RWPE1 (cell line): ENCODE measurements at regions of chr12 and their contacts with region 1.

Region 1: GRCh38 chr12:47758834-47759690 is at the start of gene RAPGEF3:
- DNase-seq: peak; percentile 93
- H3K27ac ChIP-seq: peak within 1 kb of the TSS; percentile 80
- CTCF ChIP-seq: peak; percentile 70

Region 2: DNA sequence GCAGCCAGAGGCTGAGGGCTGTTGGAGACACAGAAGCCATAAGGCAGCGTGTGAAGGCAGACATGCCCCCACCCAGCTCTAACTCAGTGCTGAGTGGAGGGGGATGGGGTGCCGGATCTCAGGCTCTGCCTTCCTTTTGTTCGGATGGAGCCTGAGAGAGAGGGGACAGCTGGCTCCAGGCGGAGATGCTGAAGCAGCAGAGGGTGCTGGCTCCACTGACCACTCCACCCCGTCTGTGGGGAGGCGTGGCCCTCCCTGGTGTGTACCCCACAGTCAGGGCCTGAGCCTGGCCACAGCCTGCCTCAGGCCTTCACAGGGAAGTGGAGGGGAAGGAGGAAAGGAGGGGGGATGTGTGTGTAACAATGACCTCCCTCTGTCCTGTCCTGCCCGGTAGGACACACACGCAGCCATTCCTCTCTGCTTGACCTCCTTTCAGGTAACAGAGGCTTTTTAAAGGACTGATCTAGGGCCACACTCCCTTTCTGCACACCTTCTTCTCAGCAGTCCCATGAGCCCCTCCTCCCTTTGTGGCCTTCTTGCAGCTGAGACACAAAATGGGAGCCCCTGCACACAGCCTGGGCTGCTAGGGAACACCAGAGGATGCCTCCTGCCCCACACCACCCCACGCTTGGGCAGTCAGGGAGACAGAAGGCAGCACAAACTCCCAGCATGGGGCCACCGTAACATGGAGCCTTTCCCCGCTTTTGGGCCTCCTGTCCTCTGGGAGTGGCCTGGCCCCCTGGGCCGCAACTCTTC is 24.2 kb before region 1 on chr12:
- CTCF ChIA-PET with region 1: no interaction called
- POLR2A ChIA-PET with region 1: no interaction called
- DNase-seq: no peak
- H3K27ac ChIP-seq: no peak overlapping the region
- CTCF ChIP-seq: no peak

Region 3: DNA sequence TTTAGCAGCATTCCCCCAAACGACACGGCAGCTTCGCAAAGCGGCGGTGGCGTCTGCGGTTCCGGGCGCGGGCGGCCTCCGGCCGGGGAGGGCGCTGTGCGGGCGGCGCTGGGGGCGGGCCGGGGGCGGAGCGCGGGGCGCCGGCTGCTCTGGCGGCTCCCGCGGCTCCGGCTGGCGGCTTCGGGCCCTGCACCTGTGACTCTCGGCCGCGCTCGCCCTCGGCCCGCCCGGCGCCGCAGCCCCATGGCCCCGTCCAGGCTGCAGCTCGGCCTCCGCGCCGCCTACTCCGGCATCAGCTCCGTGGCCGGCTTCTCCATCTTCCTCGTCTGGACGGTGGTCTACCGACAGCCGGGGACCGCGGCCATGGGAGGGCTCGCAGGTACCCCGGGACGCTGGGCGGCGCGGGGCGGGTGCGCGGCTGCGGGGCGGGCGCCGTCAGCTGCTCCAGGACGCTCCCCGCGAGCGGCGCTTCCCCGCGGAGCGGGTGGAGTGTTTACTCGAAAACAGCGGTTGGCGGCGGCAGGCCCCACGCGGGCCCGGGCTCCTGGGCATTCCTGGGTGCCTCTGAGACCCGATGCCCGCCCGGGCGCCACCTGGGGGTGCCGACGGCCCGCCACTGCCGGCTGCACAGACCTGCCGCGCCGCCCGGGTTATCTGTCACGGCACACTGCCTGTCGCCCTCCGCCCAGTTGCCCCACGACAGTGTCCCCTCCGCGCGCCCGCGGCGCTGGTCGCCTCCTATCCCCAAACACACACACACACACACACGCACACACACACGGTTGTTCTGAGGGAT is 14.2 kb after region 1 on chr12 and contains the start of gene SLC48A1:
- CTCF ChIA-PET with region 1: interaction called, 23 read pairs
- POLR2A ChIA-PET with region 1: interaction called, 3 read pairs
- DNase-seq: peak; percentile 87
- H3K27ac ChIP-seq: peak within 1 kb of the TSS; percentile 68
- CTCF ChIP-seq: peak; percentile 79